ENCODE measurements at regions of chr13 and their contacts with region 1.

Region 1: GRCh38 chr13:27619728-27620376 is 477 bp downstream of the LNX2 start:
- DNase-seq: peak; percentile 57
- H3K4me3 ChIP-seq: peak overlapping the region; percentile 80 to 98 (median 94)
- H3K27ac ChIP-seq: peak overlapping the region; percentile 99
- H3K4me1 ChIP-seq: peaks cover 8 to 50% (median 26%) of the 10 kb centered on the region in 4 donors
- H3K27me3 ChIP-seq: no peaks in the 10 kb centered on the region
- CTCF ChIP-seq: peak; percentile 21 to 61 (median 42)
- EP300 ChIP-seq: no peak
- POLR2A ChIP-seq: no peak

Region 2: GRCh38 chr13:27424246-27425157 is 195.3 kb before region 1 on chr13 and contains the start of gene GTF3A:
- in situ Hi-C with region 1: no loop called
- intact Hi-C with region 1: loop called (anchors 10 kb)
- DNase-seq: peak; percentile 88
- H3K4me3 ChIP-seq: peak within 1 kb of the TSS; percentile 41 to 71 (median 54)
- H3K27ac ChIP-seq: peak within 1 kb of the TSS; percentile 87 to 93 (median 90)
- H3K4me1 ChIP-seq: peaks cover 16 to 37% (median 31%) of the 10 kb centered on the region in 4 donors
- H3K27me3 ChIP-seq: no peaks in the 10 kb centered on the region
- CTCF ChIP-seq: no peak
- EP300 ChIP-seq: no peak
- POLR2A ChIP-seq: peak; percentile 88
- total RNA-seq, gene GTF3A: 43.1 to 195 (median 60.0) TPM

Region 3: GRCh38 chr13:27449936-27450828 is 169.7 kb before region 1 on chr13 and contains the start of gene MTIF3:
- in situ Hi-C with region 1: loop called in 1 of 4 experiments (anchors 10 kb)
- intact Hi-C with region 1: no loop called
- DNase-seq: peak; percentile 98
- H3K4me3 ChIP-seq: peak within 1 kb of the TSS; percentile 66 to 94 (median 76)
- H3K27ac ChIP-seq: peak within 1 kb of the TSS; percentile 95 to 100 (median 100)
- H3K4me1 ChIP-seq: peaks cover 10 to 37% (median 18%) of the 10 kb centered on the region in 4 donors
- H3K27me3 ChIP-seq: no peaks in the 10 kb centered on the region
- CTCF ChIP-seq: peak in 2 of 5 experiments; percentile 5 to 16
- EP300 ChIP-seq: no peak
- POLR2A ChIP-seq: peak; percentile 94
- total RNA-seq, gene MTIF3: 27.7 to 98.3 (median 66.7) TPM

Measured in transverse colon (tissue), 4 donors.